ENCODE measurements at regions of chr10 and their contacts with region 1.

Region 1: DNA sequence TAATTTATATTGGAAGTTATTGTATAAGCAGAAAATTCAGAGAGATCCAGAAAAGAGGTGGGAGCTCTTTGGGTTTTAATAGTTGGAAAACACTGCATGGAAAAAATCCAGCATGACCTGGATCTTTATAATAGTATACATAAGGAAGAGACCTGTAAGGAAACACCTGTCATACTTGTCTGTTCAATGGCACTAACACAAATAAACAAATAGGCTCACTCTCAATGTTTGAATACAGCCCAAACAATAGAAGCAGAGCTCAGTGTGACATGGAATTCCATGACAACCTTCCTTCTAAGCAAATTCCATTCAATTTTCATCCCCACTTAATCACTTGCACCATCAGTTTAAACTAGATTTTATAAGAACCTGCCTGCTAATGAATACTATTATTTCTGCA is 31.7 kb downstream of the CISD1 start:
- DNase-seq: no peak
- H3K4me3 ChIP-seq: no peak overlapping the region
- CTCF ChIP-seq: no peak

Region 2: GRCh38 chr10:58177362-58177947 is 123.2 kb before region 1 on chr10:
- in situ Hi-C with region 1: loop called (anchors 5 kb)
- DNase-seq: no peak
- H3K4me3 ChIP-seq: no peak overlapping the region
- CTCF ChIP-seq: peak; percentile 32

Region 3: GRCh38 chr10:58189269-58189668 is 111.4 kb before region 1 on chr10:
- in situ Hi-C with region 1: no loop called
- DNase-seq: no peak
- H3K4me3 ChIP-seq: no peak overlapping the region
- CTCF ChIP-seq: no peak

Region 4: DNA sequence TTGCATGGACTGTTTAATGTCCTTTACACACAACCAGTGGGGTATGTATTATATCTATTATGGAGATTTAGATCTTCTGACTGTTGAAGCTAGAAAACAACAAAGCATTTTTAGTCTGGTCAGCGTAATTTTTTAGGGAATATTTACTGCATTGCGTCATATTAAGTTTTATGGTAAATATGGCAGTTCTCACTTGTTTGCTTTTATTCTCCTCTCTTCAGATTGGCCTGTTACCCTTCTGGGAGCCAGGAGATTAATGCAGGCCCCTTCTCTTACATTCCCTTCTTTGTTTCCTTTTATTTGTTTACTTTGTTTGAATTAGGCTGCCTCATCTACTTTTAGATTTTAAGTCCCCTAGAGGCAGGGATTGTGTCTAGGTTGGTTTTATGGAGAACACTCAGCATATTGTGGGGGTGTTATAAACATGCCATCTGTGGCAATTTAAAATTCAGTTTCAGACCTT is 47.9 kb after region 1 on chr10:
- in situ Hi-C with region 1: loop called (anchors 5 kb)
- DNase-seq: no peak
- H3K4me3 ChIP-seq: no peak overlapping the region
- CTCF ChIP-seq: no peak